Breast epithelium (tissue), 4 donors: ENCODE measurements at regions of chr6 and their contacts with region 1.

Region 1: GRCh38 chr6:12401200-12401599 is 111.0 kb downstream of the EDN1 start:
- DNase-seq: no peak
- H3K4me3 ChIP-seq: no peak overlapping the region
- H3K27ac ChIP-seq: no peak overlapping the region
- H3K4me1 ChIP-seq: no peaks in the 10 kb centered on the region
- H3K27me3 ChIP-seq: no peaks in the 10 kb centered on the region
- CTCF ChIP-seq: no peak
- POLR2A ChIP-seq: no peak

Region 2: GRCh38 chr6:12222405-12223366 is 178.5 kb before region 1 on chr6:
- intact Hi-C with region 1: no loop called
- DNase-seq: no peak
- H3K4me3 ChIP-seq: no peak overlapping the region
- H3K27ac ChIP-seq: peak overlapping the region; percentile 36 to 63
- H3K4me1 ChIP-seq: no peaks in the 10 kb centered on the region
- H3K27me3 ChIP-seq: no peaks in the 10 kb centered on the region
- CTCF ChIP-seq: no peak
- POLR2A ChIP-seq: no peak

Region 3: DNA sequence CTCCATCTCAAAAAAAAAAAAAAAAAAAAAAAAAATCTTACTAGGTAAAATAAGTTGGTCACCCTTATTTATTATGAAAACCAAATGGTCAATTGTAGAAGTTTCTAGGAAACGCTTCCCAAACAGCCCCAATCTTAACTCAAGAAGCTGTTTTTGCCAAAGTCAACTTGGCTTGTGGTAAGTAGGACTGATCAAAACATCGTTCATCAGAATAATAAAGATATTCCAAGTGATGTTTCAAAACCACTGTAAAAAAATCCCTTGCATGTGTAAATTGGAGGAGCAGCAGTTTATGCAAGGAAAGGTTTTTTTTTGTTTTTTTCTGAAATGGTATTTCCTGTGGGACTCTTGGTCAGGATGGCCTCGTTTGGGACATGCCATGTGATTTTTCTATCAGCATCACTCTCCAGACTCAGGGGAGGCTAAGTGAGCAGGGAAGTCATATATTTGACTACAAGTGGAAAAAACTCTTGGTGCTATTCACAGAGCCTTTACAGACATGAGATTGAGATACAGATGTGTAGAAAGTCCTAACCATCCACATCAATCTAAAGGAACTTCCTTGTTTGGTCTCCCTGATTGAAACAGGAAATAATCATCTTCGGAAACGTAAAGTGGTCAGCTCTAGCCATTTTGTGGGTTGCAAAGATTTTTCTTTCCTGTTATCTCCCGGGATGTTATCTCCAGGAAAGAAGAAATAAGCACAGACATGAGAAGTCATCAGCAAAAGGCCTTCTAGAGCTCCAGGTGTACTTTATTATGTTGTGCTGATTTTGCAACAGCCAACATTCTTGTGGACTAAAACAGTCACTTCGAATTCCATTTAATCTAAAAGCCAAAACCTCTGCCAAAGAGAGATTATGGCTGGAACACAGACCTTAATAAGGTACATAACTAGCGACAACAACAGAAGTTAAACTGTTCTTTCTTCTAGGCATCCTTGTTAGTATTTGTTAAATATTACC is 66.8 kb after region 1 on chr6:
- intact Hi-C with region 1: loop called (anchors 2 kb)
- DNase-seq: no peak
- H3K4me3 ChIP-seq: no peak overlapping the region
- H3K27ac ChIP-seq: peak overlapping the region in 1 of 2 donors; percentile 65
- H3K4me1 ChIP-seq: no peaks in the 10 kb centered on the region
- H3K27me3 ChIP-seq: no peaks in the 10 kb centered on the region
- CTCF ChIP-seq: no peak
- POLR2A ChIP-seq: no peak